Activated CD8-positive, alpha-beta T cell treated with anti-CD3 and anti-CD28 coated beads for 36 hours (primary cell): ENCODE measurements at regions of chr9 and their contacts with region 1.

Region 1: DNA sequence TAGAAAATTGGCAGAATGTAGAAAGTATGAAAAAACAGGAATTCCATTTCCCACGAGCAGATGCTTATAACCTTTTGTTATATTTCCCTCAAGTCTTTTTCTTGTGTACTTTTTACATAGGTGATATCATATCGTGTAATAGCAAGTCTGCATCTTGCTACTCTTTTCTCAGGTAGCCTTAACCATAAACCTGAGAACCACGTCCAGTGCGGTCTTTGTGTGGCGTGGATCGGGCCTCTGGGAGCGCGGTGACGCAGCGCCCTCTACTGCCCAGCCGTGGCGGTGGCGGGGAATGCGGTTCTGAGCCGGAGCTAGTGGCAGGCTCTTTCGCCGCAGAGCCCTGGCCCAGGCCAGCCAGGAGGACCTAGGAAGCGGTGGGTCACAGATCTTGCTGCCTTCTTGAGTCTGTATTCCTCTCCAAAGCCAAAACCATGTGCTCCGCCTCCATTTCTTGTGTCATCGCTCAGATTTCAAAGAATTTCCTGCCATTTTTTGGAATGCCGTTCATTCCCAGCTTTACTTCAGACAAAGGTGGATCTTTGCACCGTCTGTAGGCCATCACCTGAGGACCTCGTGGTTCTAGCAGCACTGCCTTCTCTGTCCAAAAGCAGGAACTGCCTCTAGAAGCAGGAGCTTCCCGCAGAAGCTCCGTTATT is 71.9 kb downstream of the MVB12B start:
- DNase-seq: peak; percentile 80
- ATAC-seq: no peak
- H3K4me3 Mint-ChIP-seq: no peak overlapping the region
- H3K27ac Mint-ChIP-seq: peak overlapping the region; percentile 63
- H3K4me1 Mint-ChIP-seq: peaks cover 57% of the 10 kb centered on the region
- H3K27me3 Mint-ChIP-seq: no peaks in the 10 kb centered on the region
- CTCF ChIP-seq: peak; percentile 97

Region 2: DNA sequence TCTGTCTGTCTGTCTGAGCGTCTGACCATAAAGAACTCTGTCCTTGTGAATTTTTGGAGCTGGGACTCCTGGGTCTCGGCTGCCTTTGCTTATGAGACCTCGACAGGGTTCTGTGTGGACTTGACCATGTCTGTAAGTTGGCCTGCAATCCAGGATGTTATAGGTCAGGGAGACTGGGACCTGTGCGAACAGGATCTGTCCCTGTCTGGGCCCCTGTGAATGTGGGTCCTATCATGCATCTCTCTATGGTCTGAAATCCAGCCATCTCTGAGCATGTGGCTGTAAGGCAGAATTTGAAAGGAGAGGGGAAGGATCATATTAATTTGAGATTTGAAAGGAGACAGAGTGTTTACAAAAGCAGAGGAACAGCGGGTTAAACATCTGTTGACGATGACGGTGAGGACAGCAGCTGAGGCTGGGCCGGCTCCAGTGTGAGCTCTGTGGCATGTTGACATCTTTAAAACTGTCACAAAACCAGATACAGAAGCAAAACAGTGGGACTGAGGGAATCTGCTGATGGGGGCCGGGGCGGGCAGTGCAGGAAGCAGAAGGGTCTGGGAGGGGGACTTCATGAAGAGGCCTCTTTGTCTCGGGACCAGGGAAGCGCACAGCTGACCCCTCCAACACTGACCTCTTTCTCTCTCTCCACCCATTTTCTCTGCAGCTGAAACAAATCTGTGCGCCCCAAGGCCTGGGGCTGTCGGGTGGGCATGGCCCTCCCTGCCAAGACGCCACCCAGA is 91.0 kb before region 1 on chr9:
- CTCF ChIA-PET with region 1: interaction called, 61 read pairs
- POLR2A ChIA-PET with region 1: interaction called, 3 read pairs
- intact Hi-C with region 1: no loop called
- DNase-seq: no peak
- ATAC-seq: no peak
- H3K4me3 Mint-ChIP-seq: no peak overlapping the region
- H3K27ac Mint-ChIP-seq: no peak overlapping the region
- H3K4me1 Mint-ChIP-seq: no peaks in the 10 kb centered on the region
- H3K27me3 Mint-ChIP-seq: no peaks in the 10 kb centered on the region
- CTCF ChIP-seq: no peak

Region 3: GRCh38 chr9:126326228-126327005 is 72.1 kb before region 1 on chr9 and contains the start of gene MVB12B:
- CTCF ChIA-PET with region 1: interaction called, 104 read pairs
- POLR2A ChIA-PET with region 1: interaction called, 16 read pairs
- intact Hi-C with region 1: loop called (anchors 5 kb)
- DNase-seq: peak; percentile 36
- ATAC-seq: peak; percentile 68
- H3K4me3 Mint-ChIP-seq: peak within 1 kb of the TSS; percentile 72
- H3K27ac Mint-ChIP-seq: peak within 1 kb of the TSS; percentile 82
- H3K4me1 Mint-ChIP-seq: peaks cover 40% of the 10 kb centered on the region
- H3K27me3 Mint-ChIP-seq: no peaks in the 10 kb centered on the region
- CTCF ChIP-seq: no peak
- total RNA-seq, gene MVB12B: 6.4 to 6.6 TPM

Region 4: GRCh38 chr9:126425869-126426268 is 27.3 kb after region 1 on chr9:
- CTCF ChIA-PET with region 1: interaction called, 11 read pairs
- POLR2A ChIA-PET with region 1: no interaction called
- intact Hi-C with region 1: no loop called
- DNase-seq: no peak
- ATAC-seq: no peak
- H3K4me3 Mint-ChIP-seq: no peak overlapping the region
- H3K27ac Mint-ChIP-seq: no peak overlapping the region
- H3K4me1 Mint-ChIP-seq: peaks cover 12% of the 10 kb centered on the region
- H3K27me3 Mint-ChIP-seq: no peaks in the 10 kb centered on the region
- CTCF ChIP-seq: no peak

Region 5: GRCh38 chr9:126464694-126465441 is 66.3 kb after region 1 on chr9:
- CTCF ChIA-PET with region 1: interaction called, 34 read pairs
- POLR2A ChIA-PET with region 1: interaction called, 6 read pairs
- intact Hi-C with region 1: loop called (anchors 2 kb)
- DNase-seq: no peak
- ATAC-seq: no peak
- H3K4me3 Mint-ChIP-seq: no peak overlapping the region
- H3K27ac Mint-ChIP-seq: no peak overlapping the region
- H3K4me1 Mint-ChIP-seq: peaks cover 26% of the 10 kb centered on the region
- H3K27me3 Mint-ChIP-seq: no peaks in the 10 kb centered on the region
- CTCF ChIP-seq: no peak

Region 6: DNA sequence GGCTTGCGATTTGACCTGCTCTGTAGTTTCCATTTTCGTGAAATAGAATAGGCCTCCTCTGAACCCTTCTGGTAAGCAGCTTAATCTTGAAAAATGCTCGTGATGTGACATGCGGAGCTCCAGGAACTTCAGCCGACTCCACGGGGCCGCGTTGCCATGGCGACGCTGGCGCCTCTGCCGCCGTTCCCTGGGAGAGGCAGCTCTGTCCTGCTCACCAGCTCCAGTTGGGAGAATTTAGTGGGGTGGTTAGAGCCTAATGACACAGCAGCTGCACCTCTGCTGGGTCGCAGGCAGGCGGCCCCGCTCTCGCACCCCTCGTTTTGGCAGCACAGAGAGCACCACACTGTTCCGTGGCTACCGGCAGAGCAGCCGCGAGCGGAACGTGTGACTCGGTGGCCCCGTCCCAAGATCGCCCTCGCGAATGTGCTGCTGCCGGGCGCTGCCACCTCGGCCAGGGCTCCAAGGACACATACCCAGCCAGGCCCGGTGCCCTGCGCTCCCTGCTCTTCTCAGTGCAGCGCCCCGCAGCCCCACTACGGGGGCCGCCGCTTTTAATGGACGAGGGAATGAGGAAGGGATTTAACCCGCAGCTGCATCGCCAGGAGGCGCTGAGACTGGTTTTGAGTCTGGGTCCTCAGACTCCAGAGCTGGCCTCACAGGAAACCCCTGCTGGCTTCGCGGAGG is 84.0 kb after region 1 on chr9:
- CTCF ChIA-PET with region 1: interaction called, 12 read pairs
- POLR2A ChIA-PET with region 1: interaction called, 3 read pairs
- intact Hi-C with region 1: no loop called
- DNase-seq: no peak
- ATAC-seq: no peak
- H3K4me3 Mint-ChIP-seq: no peak overlapping the region
- H3K27ac Mint-ChIP-seq: no peak overlapping the region
- H3K4me1 Mint-ChIP-seq: peaks cover 14% of the 10 kb centered on the region
- H3K27me3 Mint-ChIP-seq: no peaks in the 10 kb centered on the region
- CTCF ChIP-seq: no peak

Region 7: GRCh38 chr9:126523611-126524111 is 125.1 kb after region 1 on chr9:
- CTCF ChIA-PET with region 1: no interaction called
- POLR2A ChIA-PET with region 1: no interaction called
- intact Hi-C with region 1: no loop called
- DNase-seq: peak; percentile 71
- ATAC-seq: peak; percentile 80
- H3K4me3 Mint-ChIP-seq: peak overlapping the region; percentile 16
- H3K27ac Mint-ChIP-seq: peak overlapping the region; percentile 36
- H3K4me1 Mint-ChIP-seq: peaks cover 23% of the 10 kb centered on the region
- H3K27me3 Mint-ChIP-seq: peaks cover 21% of the 10 kb centered on the region
- CTCF ChIP-seq: no peak